BJ (cell line): ENCODE measurements at regions of chr12 and their contacts with region 1.

Region 1: GRCh38 chr12:50825372-50825838 is 17.3 kb upstream of the TMPRSS12 start:
- DNase-seq: peak; percentile 41
- H3K4me3 ChIP-seq: no peak overlapping the region
- H3K27me3 ChIP-seq: no peaks in the 10 kb centered on the region
- CTCF ChIP-seq: peak; percentile 38; the same call in 1 of the 2 replicates

Region 2: GRCh38 chr12:50836916-50837315 is 11.5 kb after region 1 on chr12:
- CTCF ChIA-PET with region 1: interaction called, 10 read pairs
- POLR2A ChIA-PET with region 1: interaction called, 4 read pairs
- DNase-seq: no peak
- H3K4me3 ChIP-seq: no peak overlapping the region
- H3K27me3 ChIP-seq: no peaks in the 10 kb centered on the region; the same call in 1 of the 2 replicates
- CTCF ChIP-seq: no peak